Naive thymus-derived CD8-positive, alpha-beta T cell (primary cell): ENCODE measurements at regions of chr22 and their contacts with region 1.

Region 1: GRCh38 chr22:40326905-40327735 is 19.2 kb upstream of the ADSL start:
- DNase-seq: peak in 2 of 10 donors; percentile 60 to 61
- ATAC-seq: peak; percentile 8 to 10
- H3K4me3 Mint-ChIP-seq: peak overlapping the region in 9 of 10 donors; percentile 12 to 76 (median 67)
- H3K27ac Mint-ChIP-seq: peak overlapping the region; percentile 95 to 99 (median 98)
- H3K4me1 Mint-ChIP-seq: peaks cover 35 to 99% (median 95%) of the 10 kb centered on the region in 4 donors
- H3K27me3 Mint-ChIP-seq: no peaks in the 10 kb centered on the region

Region 2: GRCh38 chr22:40036591-40037225 is 290.4 kb before region 1 on chr22:
- POLR2A ChIA-PET with region 1: no interaction called
- DNase-seq: peak; percentile 22 to 74 (median 40)
- ATAC-seq: peak; percentile 45 to 80
- H3K4me3 Mint-ChIP-seq: no peak overlapping the region
- H3K27ac Mint-ChIP-seq: no peak overlapping the region
- H3K4me1 Mint-ChIP-seq: peaks cover 0 to 10% (median 3%) of the 10 kb centered on the region in 4 donors
- H3K27me3 Mint-ChIP-seq: peaks cover 7 to 23% (median 9%) of the 10 kb centered on the region in 5 donors

Region 3: GRCh38 chr22:40289991-40290459 is 37.1 kb before region 1 on chr22:
- POLR2A ChIA-PET with region 1: interaction called, 16 read pairs
- DNase-seq: peak; percentile 50 to 83 (median 68)
- ATAC-seq: peak; percentile 88 to 92
- H3K4me3 Mint-ChIP-seq: peak overlapping the region; percentile 36 to 81 (median 74)
- H3K27ac Mint-ChIP-seq: peak overlapping the region; percentile 92 to 99 (median 97)
- H3K4me1 Mint-ChIP-seq: peaks cover 27 to 64% (median 54%) of the 10 kb centered on the region in 4 donors
- H3K27me3 Mint-ChIP-seq: no peaks in the 10 kb centered on the region